AG04450 (cell line): ENCODE measurements at regions of chr16 and their contacts with region 1.

Region 1: DNA sequence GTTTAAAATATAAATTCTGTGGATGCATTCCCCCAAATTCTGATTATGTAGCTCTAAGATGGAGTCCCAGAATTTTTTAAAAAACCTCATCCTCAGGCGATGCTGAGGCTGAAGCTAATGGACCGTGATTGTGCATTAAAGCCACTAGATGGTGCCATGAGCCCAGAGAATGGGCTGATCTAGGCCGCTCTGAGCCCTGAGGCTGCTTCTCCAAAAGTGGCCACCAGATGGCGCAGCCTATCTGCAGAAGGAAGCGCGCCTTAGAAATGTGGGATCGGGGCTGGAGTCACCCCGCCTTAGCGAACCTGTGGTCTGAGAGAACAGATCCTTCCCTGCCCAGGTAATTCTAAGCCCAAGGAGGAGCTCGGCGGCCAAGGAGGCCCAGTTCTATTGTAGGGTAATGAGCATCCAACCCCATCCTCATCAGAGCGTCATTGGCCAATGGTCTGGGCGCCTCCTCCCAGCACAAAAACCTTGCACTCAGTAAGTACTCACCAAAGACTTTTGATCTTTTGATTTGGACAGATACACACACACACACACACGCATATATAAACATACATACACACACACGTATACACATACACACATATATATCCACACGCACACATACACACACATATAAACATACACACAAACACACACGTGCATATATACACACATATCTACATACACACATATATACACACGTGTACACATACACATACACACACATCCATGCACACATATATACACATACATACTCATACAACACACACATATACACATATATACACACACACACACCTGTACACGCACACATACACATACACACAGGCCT is 13.7 kb upstream of the MMP2 start:
- DNase-seq: peak; percentile 72
- H3K4me3 ChIP-seq: peak overlapping the region; percentile 29; the same call in 1 of the 2 replicates
- H3K27ac ChIP-seq: no peak overlapping the region
- H3K27me3 ChIP-seq: no peaks in the 10 kb centered on the region
- CTCF ChIP-seq: peak; percentile 99

Region 2: GRCh38 chr16:53549970-53550690 is 1915.2 kb before region 1 on chr16:
- CTCF ChIA-PET with region 1: interaction called, 19 read pairs
- POLR2A ChIA-PET with region 1: no interaction called
- DNase-seq: peak; percentile 70
- H3K4me3 ChIP-seq: no peak overlapping the region
- H3K27ac ChIP-seq: no peak overlapping the region
- H3K27me3 ChIP-seq: peaks cover 31% of the 10 kb centered on the region
- CTCF ChIP-seq: peak; percentile 79

Region 3: DNA sequence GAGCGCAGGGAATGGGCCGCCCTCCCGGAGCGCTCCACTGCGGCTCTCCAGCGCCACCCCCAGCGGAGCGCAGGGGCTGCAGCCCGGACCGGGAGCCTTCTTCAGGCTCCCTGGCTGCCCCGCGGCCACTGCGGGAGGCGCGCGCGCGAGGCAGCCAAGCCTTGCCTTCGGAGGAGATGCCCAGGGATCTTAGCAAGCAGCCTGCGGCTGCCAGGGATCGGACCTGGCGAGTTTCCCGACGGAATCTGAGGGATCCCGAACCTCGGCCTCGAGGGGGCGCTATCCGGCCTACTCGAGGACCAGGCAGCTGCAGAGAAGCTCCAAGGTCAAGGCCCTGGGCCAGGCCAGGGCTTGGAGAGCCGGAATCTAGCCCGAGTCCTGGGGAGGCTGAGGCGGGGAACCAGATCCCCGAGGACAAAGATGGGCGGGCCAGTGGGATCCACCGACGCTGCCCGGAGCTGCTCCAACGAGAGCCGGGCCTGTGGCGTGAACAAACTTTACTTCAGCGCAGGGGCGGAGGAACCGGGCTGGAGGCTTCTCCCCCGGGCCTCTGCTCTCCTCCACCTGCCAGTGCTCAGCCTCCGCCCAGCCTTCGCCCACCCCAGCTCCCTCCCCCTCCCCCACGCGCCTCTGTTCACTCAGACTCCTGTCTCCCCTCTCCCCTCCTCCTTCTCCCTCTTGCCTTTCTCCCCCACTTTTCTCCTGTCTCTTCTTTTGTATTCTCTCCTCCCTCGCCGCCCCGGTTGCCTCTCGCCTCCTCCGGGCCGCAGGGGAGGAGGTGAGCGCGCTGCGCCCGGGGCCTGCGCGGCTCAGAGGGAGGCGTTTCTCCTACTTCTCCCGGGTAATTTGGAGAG is 141.4 kb before region 1 on chr16 and contains the start of gene IRX6:
- CTCF ChIA-PET with region 1: no interaction called
- POLR2A ChIA-PET with region 1: no interaction called
- DNase-seq: no peak
- H3K4me3 ChIP-seq: no peak within 1 kb of the TSS
- H3K27ac ChIP-seq: no peak within 1 kb of the TSS
- H3K27me3 ChIP-seq: peaks cover 35% of the 10 kb centered on the region
- CTCF ChIP-seq: no peak
- polyA plus RNA-seq, gene IRX6: not detected in 2 replicates

Region 4: GRCh38 chr16:55487048-55487803 is 21.9 kb after region 1 on chr16:
- CTCF ChIA-PET with region 1: interaction called, 18 read pairs
- POLR2A ChIA-PET with region 1: interaction called, 3 read pairs
- DNase-seq: peak; percentile 76
- H3K4me3 ChIP-seq: no peak overlapping the region
- H3K27ac ChIP-seq: peak overlapping the region; percentile 96
- H3K27me3 ChIP-seq: no peaks in the 10 kb centered on the region
- CTCF ChIP-seq: no peak

Region 5: GRCh38 chr16:55515111-55515510 is 49.8 kb after region 1 on chr16:
- CTCF ChIA-PET with region 1: interaction called, 37 read pairs
- POLR2A ChIA-PET with region 1: no interaction called
- DNase-seq: no peak
- H3K4me3 ChIP-seq: no peak overlapping the region
- H3K27ac ChIP-seq: no peak overlapping the region
- H3K27me3 ChIP-seq: no peaks in the 10 kb centered on the region
- CTCF ChIP-seq: no peak

Region 6: GRCh38 chr16:55559233-55559632 is 93.9 kb after region 1 on chr16:
- CTCF ChIA-PET with region 1: interaction called, 26 read pairs
- POLR2A ChIA-PET with region 1: no interaction called
- DNase-seq: no peak
- H3K4me3 ChIP-seq: no peak overlapping the region
- H3K27ac ChIP-seq: no peak overlapping the region
- H3K27me3 ChIP-seq: no peaks in the 10 kb centered on the region
- CTCF ChIP-seq: no peak

Region 7: DNA sequence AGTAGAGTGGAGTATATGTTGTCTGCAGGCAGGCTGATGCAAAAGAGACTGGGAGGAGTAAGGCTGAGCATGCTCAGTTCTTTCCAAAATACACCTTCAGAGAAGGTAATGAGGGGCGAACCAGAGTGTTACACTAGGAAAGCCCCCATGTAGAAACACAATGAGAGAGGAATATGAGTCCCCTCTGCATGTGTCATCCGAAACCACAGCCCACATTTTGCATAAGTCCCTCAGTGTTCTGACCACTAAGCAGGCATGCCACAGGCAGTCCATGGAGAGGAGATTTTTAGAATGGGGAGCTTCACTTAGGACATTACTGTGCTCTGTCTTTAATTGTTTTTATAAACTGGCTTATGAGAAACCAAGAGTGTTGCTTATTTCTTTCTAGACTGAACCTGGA is 222.5 kb after region 1 on chr16:
- CTCF ChIA-PET with region 1: interaction called, 31 read pairs
- POLR2A ChIA-PET with region 1: no interaction called
- DNase-seq: no peak
- H3K4me3 ChIP-seq: no peak overlapping the region
- H3K27ac ChIP-seq: no peak overlapping the region
- H3K27me3 ChIP-seq: peaks cover 4% of the 10 kb centered on the region
- CTCF ChIP-seq: no peak